Endothelial cell of umbilical vein (primary cell): ENCODE measurements at regions of chr19 and their contacts with region 1.

Region 1: GRCh38 chr19:12913851-12914690 is 5.0 kb downstream of the SYCE2 start:
- DNase-seq: no peak
- H3K4me3 ChIP-seq: no peak overlapping the region
- H3K27ac ChIP-seq: no peak overlapping the region
- H3K4me1 ChIP-seq: no peaks in the 10 kb centered on the region
- H3K27me3 ChIP-seq: peaks cover 3% of the 10 kb centered on the region in 2 experiments
- CTCF ChIP-seq: no peak
- POLR2A ChIP-seq: no peak

Region 2: DNA sequence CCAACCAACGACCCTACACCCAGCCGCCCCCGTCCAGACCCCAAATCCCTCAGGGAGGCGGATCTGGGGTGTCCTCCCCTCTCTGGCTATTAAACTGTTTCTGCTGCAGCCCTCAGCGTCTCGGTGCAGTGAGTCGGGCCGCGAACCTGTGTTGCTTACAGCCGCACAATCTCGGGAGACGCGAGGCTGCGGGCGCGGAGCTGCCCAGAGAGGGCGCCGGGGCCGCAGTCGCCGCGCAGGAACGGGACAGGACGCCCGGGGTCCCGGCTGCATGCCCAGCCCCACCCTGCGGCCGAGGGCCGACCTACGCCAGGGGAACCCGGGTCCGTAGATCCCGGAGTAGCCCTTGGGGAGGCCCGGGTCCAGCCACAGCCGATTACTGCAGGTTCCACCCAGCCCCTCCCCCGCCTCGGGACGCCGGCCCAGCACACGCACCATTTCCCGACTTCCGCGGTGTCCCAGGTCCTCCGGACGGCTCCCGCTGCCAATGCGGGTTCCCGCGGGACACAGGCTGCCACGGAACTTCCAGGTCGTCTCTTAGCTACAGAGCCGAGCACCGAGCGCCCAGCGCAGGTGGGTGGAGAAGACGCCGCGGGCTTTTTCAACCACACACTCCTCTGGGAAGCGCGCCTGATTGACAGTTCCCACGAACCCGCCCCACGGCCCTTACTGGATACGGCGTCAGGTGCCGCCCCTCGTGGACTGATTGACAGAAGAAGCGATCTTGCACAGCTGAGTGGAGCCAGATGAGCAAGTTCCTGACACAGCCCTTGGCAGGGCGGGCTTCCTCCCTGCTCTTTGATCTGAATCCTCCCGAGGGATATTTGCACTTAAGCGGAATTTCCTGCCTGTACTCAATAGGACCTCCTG is 513.2 kb before region 1 on chr19 and contains the start of gene ZNF799:
- CTCF ChIA-PET with region 1: no interaction called
- POLR2A ChIA-PET with region 1: no interaction called
- dilution Hi-C with region 1: no loop called
- intact Hi-C with region 1: no loop called
- DNase-seq: peak; percentile 97
- H3K4me3 ChIP-seq: peak within 1 kb of the TSS; percentile 80 to 87 (median 81)
- H3K27ac ChIP-seq: peak within 1 kb of the TSS; percentile 49
- H3K4me1 ChIP-seq: peaks cover 7% of the 10 kb centered on the region
- H3K27me3 ChIP-seq: no peaks in the 10 kb centered on the region
- CTCF ChIP-seq: peak in 1 of 2 donors; percentile 5
- POLR2A ChIP-seq: no peak
- total RNA-seq, gene ZNF799: 2.7 and 3.0 TPM in 2 replicates

Region 3: DNA sequence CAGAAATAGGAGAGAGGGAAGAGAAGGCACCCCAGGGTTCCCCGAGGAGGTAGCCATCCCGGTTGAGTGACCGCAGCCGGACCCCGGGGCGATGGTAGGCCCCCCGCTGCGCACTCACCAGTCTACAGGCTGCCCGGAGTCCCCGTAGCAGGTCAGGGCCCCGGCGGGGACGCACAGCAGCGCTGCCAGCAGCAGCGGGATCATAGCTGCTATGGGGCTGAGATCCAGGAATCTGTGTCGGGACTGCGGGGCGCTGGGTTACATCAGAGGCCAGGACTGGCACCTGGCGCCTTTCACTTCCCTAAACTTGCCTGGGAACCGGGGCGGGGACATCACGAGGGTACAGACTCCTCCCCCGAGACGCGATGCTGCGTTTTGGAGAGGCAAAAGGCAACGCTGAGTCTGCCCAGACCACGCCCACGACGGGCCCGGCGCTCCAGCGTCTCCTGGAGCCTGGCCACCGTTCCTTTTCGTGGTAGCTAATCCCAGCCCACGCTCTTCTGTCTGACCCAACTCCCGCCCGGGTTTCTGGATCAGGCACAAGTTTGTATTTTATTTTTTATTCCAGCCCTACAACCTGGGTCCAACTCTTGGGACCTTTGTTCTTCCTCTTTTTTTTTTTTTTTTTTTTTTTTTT is 32.8 kb before region 1 on chr19 and contains the start of gene DNASE2:
- CTCF ChIA-PET with region 1: no interaction called
- POLR2A ChIA-PET with region 1: no interaction called
- dilution Hi-C with region 1: no loop called
- intact Hi-C with region 1: loop called (anchors 2 kb)
- DNase-seq: peak; percentile 82
- H3K4me3 ChIP-seq: peak within 1 kb of the TSS; percentile 25 to 78 (median 49)
- H3K27ac ChIP-seq: peak within 1 kb of the TSS; percentile 49
- H3K4me1 ChIP-seq: peaks cover 4% of the 10 kb centered on the region
- H3K27me3 ChIP-seq: peaks cover 9 to 20% of the 10 kb centered on the region in 2 experiments
- CTCF ChIP-seq: no peak
- POLR2A ChIP-seq: peak; percentile 36
- total RNA-seq, gene DNASE2: 31.3 and 34.8 TPM in 2 replicates